Adrenal gland (tissue), 19 donors: ENCODE measurements at regions of chrX and their contacts with region 1.

Region 1: GRCh38 chrX:123833387-123833786 is 26.5 kb upstream of the XIAP start:
- DNase-seq: peak; percentile 26 to 68 (median 44)
- H3K4me3 ChIP-seq: no peak overlapping the region
- H3K27ac ChIP-seq: no peak overlapping the region
- H3K4me1 ChIP-seq: no peaks in the 10 kb centered on the region
- H3K27me3 ChIP-seq: no peaks in the 10 kb centered on the region
- CTCF ChIP-seq: peak; percentile 63 to 83 (median 71)
- POLR2A ChIP-seq: no peak

Region 2: DNA sequence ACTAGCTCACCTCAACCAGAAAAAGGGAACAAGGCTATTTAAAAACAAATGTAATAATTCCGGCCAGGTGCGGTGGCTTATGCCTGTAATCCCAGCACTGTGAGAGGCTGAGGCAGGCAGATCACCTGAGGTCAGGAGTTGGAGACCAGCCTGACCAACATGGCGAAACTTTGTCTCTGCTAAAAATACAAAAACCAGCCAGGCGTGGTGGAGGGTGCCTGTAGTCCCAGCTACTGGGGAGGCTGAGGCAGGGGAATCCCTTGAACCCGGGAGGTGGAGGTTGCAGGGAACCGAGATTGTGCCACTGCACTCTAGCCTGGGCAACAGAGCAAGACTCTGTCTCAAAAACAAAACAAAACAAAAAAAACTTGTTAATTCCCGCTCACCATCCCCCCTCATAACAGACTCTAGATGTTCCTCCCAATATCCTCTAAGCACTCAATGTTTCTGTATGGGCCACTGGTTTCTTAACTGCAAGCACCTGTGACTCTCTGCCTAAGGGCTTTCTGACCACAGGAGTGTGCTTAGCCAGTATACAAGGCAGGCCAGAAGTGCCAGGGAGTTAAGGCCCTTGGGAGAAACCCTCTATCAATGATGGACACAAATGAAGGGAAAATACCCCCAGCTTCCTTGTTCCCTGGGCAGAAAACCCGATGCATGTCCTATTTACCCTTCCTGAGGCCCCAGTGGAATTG is 79.6 kb before region 1 on chrX:
- intact Hi-C with region 1: no loop called
- DNase-seq: no peak
- H3K4me3 ChIP-seq: no peak overlapping the region
- H3K27ac ChIP-seq: no peak overlapping the region
- H3K4me1 ChIP-seq: no peaks in the 10 kb centered on the region
- H3K27me3 ChIP-seq: no peaks in the 10 kb centered on the region
- CTCF ChIP-seq: no peak
- POLR2A ChIP-seq: no peak

Region 3: DNA sequence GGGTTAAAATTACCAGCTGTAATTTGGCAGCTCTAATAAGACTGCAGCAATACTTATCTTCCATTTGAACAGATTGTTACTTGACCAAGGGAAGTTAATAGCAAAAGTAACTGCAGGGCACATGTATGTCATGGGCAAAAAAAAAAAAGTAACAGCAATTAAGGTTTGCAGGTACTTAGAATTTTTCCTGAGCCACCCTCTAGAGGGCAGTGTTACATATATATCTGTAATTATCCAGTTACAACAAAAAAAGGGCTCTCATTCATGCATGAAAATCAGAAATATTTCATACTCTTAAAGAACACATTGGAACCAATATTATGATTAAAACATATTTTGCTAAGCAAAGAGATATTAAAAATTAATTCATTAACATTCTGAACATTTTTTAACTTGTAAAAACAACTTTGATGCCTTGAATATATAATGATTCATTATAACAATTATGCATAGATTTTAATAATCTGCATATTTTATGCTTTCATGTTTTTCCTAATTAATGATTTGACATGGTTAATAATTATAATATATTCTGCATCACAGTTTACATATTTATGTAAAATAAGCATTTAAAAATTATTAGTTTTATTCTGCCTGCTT is 51.5 kb after region 1 on chrX:
- intact Hi-C with region 1: loop called in 1 of 2 experiments (anchors 10 kb)
- DNase-seq: peak in 4 of 7 donors; percentile 25 to 51 (median 35)
- H3K4me3 ChIP-seq: no peak overlapping the region
- H3K27ac ChIP-seq: no peak overlapping the region
- H3K4me1 ChIP-seq: no peaks in the 10 kb centered on the region
- H3K27me3 ChIP-seq: no peaks in the 10 kb centered on the region
- CTCF ChIP-seq: peak in 5 of 6 experiments; percentile 32 to 69 (median 40)
- POLR2A ChIP-seq: no peak